GM10248 (cell line): ENCODE measurements at regions of chr4 and their contacts with region 1.

Region 1: DNA sequence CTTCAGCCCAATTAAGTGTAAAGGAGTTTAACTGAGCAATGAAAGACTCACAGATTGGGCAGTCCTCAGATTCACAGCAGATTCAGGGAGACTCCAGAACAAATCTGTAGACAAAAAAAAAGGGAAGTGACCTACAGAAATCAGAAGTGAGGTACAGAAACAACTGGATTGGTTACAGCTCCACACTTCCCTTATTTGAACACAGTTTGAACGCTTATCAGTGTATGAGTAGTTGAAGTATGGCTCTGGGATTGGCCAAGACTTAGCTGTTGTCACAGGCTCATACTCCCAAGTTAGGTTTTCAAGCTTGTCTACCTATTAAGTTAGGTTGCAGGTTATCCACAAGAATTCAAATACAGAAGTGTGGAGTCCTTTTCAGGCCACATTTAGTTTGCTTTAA is 112.4 kb upstream of the ELOVL6 start:
- DNase-seq: no peak
- CTCF ChIP-seq: no peak

Region 2: DNA sequence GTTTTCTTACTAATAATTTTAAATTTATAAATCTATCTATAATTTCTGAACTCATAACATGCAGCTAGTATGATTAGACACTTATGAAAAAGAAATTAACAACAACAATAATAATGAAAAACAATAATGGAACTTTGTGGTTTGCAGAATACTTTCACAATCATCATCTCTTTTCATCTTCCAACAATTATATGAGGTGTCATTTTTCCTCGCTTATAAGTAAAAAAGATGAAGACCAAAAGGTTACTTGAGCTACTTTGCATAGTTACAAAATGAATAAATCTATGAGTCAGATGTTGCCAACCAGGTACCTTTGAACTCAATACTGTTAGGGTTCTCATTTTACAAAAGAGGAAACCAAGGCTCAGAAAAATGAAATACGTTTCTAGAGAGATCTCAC is 13.9 kb before region 1 on chr4:
- CTCF ChIA-PET with region 1: interaction called, 17 read pairs
- POLR2A ChIA-PET with region 1: no interaction called
- DNase-seq: peak; percentile 32
- CTCF ChIP-seq: no peak

Region 3: GRCh38 chr4:110344162-110344561 is 33.4 kb after region 1 on chr4:
- CTCF ChIA-PET with region 1: interaction called, 12 read pairs
- POLR2A ChIA-PET with region 1: no interaction called
- DNase-seq: no peak
- CTCF ChIP-seq: peak; percentile 10

Region 4: DNA sequence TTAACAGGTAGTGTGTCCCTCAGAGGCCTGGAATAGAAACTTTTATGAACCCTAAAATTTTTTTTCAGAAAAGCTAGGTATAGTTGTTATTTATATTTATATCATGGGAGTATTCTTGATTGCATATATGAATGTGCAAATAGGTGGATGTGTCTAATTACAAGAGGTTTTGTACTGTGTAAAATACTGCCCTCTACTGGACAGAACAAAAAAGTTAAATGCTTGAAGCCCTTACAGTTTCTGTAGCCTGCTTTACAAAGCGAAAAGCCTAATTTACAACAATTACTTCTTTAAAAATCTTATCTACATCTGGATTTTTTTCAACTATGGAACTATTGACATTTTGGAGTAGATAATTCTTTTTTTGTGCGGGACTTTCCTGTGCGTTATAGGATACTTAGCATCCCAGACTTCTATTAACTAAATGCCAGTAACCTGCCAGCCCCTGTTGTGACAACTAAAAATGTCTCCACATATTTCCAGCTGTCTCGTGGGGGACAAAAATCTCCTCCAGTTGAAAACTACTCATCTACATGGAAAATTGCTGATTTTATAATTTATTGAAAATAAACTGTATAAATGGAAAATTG is 200.3 kb after region 1 on chr4:
- CTCF ChIA-PET with region 1: interaction called, 133 read pairs
- POLR2A ChIA-PET with region 1: no interaction called
- DNase-seq: peak; percentile 51
- CTCF ChIP-seq: peak; percentile 50

Region 5: DNA sequence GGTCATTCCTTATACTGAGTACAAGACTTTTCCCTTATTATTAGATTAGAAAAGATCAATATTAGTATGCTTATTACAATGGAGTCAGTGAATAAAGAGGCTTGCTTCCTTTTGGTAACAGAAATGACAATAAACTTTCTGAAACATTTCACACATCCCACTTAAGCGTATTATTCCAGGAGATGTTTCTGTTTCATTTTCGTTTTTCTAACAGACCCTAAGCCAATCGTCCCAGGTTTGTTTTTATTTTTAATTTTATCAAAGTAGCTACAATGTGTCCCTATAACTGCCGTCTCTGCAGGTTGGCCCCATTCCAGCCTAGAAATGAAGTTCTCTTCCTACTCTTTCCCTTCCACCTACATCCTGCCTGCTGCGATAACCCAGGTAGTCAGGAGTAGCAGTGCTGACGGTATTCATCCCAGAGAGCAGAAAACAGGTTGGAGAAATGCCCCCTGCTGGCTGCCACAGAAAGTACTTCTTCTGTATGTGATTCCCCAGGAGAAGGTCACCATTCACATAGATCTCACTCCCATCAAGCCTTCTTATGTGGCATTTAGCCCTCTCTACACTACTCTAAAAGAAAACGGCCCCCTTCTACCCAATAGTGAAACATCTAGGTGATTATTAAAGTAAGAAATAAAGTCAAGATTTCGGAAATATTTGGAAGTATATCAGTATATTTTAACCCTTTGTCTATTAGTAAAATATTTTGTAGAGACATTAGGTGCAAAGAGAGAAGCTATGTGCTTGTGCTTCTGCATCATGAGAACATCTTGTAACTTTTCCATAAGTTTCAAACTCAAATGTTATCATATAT is 205.5 kb after region 1 on chr4:
- CTCF ChIA-PET with region 1: interaction called, 133 read pairs
- POLR2A ChIA-PET with region 1: no interaction called
- DNase-seq: peak; percentile 39
- CTCF ChIP-seq: peak; percentile 79

Region 6: GRCh38 chr4:110550260-110550659 is 239.5 kb after region 1 on chr4:
- CTCF ChIA-PET with region 1: no interaction called
- POLR2A ChIA-PET with region 1: no interaction called
- DNase-seq: no peak
- CTCF ChIP-seq: no peak

Region 7: DNA sequence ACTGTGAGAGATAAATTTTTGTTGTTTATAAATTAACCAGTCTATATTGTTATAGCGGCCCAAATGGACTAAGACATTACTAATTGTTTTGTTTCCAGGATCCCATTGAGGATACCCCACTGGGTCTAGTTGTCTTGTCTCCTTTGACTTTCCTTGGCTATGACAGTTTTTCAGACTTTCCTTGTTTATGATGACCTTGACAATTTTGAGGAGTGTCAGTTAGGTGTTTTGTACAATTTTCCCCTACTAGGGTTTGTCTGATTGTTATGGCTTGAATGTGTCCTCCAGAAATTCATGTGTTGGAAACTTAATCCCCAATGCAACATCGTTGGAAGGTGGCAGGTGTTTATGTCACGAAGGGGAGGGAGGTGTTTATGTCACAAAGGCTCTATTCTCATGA is 401.7 kb after region 1 on chr4:
- CTCF ChIA-PET with region 1: no interaction called
- POLR2A ChIA-PET with region 1: no interaction called
- DNase-seq: no peak
- CTCF ChIP-seq: no peak